Activated CD4-positive, alpha-beta memory T cell treated with anti-CD3 and anti-CD28 coated beads, Interleukin-2, amount 10 ng/mL, durations not matched to agents 7 days and 5 days (primary cell): ENCODE measurements at regions of chr11 and their contacts with region 1.

Region 1: GRCh38 chr11:20387241-20388095 is at the start of gene PRMT3:
- DNase-seq: peak; percentile 97
- H3K4me3 Mint-ChIP-seq: peak within 1 kb of the TSS; percentile 83
- H3K27ac Mint-ChIP-seq: peak within 1 kb of the TSS; percentile 100
- H3K4me1 Mint-ChIP-seq: peaks cover 43% of the 10 kb centered on the region
- H3K27me3 Mint-ChIP-seq: no peaks in the 10 kb centered on the region
- total RNA-seq, gene PRMT3: 14.9 to 15.6 TPM

Region 2: GRCh38 chr11:20363500-20364411 is 23.7 kb before region 1 on chr11 and contains the start of gene HTATIP2:
- CTCF ChIA-PET with region 1: interaction called, 8 read pairs
- POLR2A ChIA-PET with region 1: interaction called, 10 read pairs
- DNase-seq: peak; percentile 75
- H3K4me3 Mint-ChIP-seq: peak within 1 kb of the TSS; percentile 81
- H3K27ac Mint-ChIP-seq: peak within 1 kb of the TSS; percentile 77
- H3K4me1 Mint-ChIP-seq: peaks cover 61% of the 10 kb centered on the region
- H3K27me3 Mint-ChIP-seq: no peaks in the 10 kb centered on the region
- total RNA-seq, gene HTATIP2: 48.6 to 50.0 TPM